ENCODE measurements at regions of chr15 and their contacts with region 1.

Region 1: DNA sequence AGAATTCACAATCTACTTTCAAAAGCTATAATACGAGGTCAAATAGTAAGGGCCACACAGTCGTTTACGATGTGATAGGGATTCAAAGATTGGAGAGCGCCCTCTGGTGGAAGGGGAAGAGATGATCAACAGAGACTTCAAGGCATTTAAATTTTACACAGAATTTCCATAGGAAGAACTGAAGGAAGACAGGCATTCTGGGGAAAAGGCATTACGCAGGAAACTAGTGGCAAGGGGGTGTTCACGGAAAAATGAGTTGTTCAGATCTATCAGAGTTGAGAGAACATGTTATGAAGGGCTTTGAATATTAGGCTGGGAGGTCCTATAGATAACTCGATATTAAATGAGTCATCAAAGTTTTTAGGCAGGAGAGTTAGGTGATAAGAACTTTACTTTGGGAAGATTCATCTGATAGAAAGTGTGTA is 128.7 kb downstream of the FRMD5 start:
- DNase-seq: peak; percentile 2 to 59 (median 23)
- ATAC-seq: no peak
- H3K4me3 ChIP-seq: no peak overlapping the region
- H3K4me3 Mint-ChIP-seq: no peak overlapping the region
- H3K27ac ChIP-seq: no peak overlapping the region
- H3K27ac Mint-ChIP-seq: no peak overlapping the region
- H3K4me1 ChIP-seq: no peaks in the 10 kb centered on the region
- H3K4me1 Mint-ChIP-seq: peaks cover 0 to 8% (median 4%) of the 10 kb centered on the region in 7 donors
- H3K27me3 ChIP-seq: no peaks in the 10 kb centered on the region
- H3K27me3 Mint-ChIP-seq: peaks cover 11 to 39% (median 22%) of the 10 kb centered on the region in 5 donors

Region 2: GRCh38 chr15:43872416-43873020 is 193.8 kb before region 1 on chr15:
- CTCF ChIA-PET with region 1: no interaction called
- POLR2A ChIA-PET with region 1: no interaction called
- intact Hi-C with region 1: loop called (anchors 1 kb)
- DNase-seq: peak in 2 of 9 donors; percentile 11 to 22
- ATAC-seq: no peak
- H3K4me3 ChIP-seq: no peak overlapping the region
- H3K4me3 Mint-ChIP-seq: no peak overlapping the region
- H3K27ac ChIP-seq: no peak overlapping the region
- H3K27ac Mint-ChIP-seq: no peak overlapping the region
- H3K4me1 ChIP-seq: peaks cover 0 to 3% of the 10 kb centered on the region in 2 donors
- H3K4me1 Mint-ChIP-seq: peaks cover 0 to 5% (median 0%) of the 10 kb centered on the region in 7 donors
- H3K27me3 ChIP-seq: no peaks in the 10 kb centered on the region
- H3K27me3 Mint-ChIP-seq: no peaks in the 10 kb centered on the region

Region 3: GRCh38 chr15:43903864-43904290 is 162.5 kb before region 1 on chr15:
- CTCF ChIA-PET with region 1: interaction called, 4 read pairs
- POLR2A ChIA-PET with region 1: no interaction called
- intact Hi-C with region 1: loop called (anchors 1 kb)
- DNase-seq: peak; percentile 8 to 62 (median 39)
- ATAC-seq: peak; percentile 65
- H3K4me3 ChIP-seq: no peak overlapping the region
- H3K4me3 Mint-ChIP-seq: no peak overlapping the region
- H3K27ac ChIP-seq: no peak overlapping the region
- H3K27ac Mint-ChIP-seq: no peak overlapping the region
- H3K4me1 ChIP-seq: no peaks in the 10 kb centered on the region
- H3K4me1 Mint-ChIP-seq: peaks cover 0 to 9% (median 4%) of the 10 kb centered on the region in 7 donors
- H3K27me3 ChIP-seq: no peaks in the 10 kb centered on the region
- H3K27me3 Mint-ChIP-seq: no peaks in the 10 kb centered on the region

Region 4: DNA sequence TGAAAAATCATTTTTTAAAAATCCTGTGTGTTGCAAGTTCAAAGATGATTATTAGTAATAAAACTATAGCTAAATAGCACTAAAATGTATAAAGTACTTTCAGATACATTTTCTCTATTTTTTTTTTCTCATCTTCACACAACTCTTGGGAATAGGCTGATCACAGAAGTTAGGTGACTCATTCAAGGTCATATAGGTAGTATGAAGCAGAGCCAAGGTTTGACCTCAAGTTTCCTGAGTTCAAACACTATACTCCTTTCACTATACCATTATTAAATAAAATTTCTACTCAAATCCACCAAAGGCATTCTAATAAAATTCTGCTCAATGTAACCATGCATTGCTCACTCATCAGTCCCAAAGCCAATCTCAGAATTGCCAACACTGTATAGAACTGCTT is 107.5 kb after region 1 on chr15:
- CTCF ChIA-PET with region 1: no interaction called
- POLR2A ChIA-PET with region 1: no interaction called
- intact Hi-C with region 1: no loop called
- DNase-seq: no peak
- ATAC-seq: no peak
- H3K4me3 ChIP-seq: no peak overlapping the region
- H3K4me3 Mint-ChIP-seq: no peak overlapping the region
- H3K27ac ChIP-seq: no peak overlapping the region
- H3K27ac Mint-ChIP-seq: no peak overlapping the region
- H3K4me1 ChIP-seq: no peaks in the 10 kb centered on the region
- H3K4me1 Mint-ChIP-seq: no peaks in the 10 kb centered on the region
- H3K27me3 ChIP-seq: peaks cover 0 to 3% of the 10 kb centered on the region in 2 donors
- H3K27me3 Mint-ChIP-seq: peaks cover 12 to 43% (median 36%) of the 10 kb centered on the region in 5 donors

Measured in naive thymus-derived CD4-positive, alpha-beta T cell (primary cell).